Brain microvascular endothelial cell (primary cell): ENCODE measurements at regions of chr6 and their contacts with region 1.

Region 1: DNA sequence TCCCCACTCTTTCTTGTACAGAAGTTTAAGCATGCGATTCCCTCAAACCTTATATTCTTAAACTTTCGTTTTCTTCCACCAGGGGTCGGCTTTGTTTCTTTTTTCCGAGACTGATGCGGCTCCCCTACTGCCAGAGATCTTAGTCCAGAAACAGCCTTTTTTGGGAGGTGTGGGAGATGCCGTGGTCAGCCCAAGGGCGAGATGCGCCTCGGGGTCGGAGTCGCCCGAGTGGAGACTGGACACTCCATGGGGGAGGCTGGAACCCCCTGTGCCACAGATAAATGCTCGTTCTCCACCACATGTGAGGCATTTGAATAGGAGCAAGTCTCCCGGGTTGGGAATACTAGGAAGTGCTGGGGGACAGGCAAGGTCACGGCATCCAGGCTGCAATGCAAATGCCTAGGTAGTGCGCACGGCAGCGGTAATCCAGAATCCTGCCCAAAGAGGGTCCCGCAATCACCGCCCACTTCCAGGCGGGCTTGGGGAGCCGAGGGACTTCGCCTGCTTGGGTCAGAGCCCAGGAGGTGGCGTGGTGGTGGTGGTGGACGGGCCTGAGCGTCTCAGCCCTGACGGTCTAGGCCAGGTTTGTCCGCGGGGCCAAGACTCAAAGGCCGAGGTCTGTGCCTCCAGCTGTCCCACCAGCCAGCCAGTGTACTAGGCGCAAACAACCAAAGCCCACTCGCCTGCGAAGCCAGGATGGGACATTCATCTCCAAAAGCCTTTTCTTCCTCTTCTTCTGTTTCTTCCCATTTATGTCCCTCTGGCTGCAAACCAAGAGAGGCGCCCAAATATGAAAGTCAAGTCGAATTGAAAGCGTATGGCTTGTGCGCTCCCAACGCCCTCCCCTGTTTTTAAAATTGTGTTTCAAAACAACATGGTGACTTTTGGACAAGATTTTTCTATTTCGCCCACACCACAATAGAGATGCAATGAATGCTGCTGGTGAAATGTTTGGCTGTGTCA is 39.3 kb upstream of the OSTM1 start:
- DNase-seq: peak; percentile 53
- H3K4me3 ChIP-seq: peak overlapping the region; percentile 43
- H3K27ac ChIP-seq: no peak overlapping the region
- H3K27me3 ChIP-seq: peaks cover 42% of the 10 kb centered on the region
- CTCF ChIP-seq: peak; percentile 64

Region 2: GRCh38 chr6:108492131-108492766 is 378.4 kb after region 1 on chr6:
- in situ Hi-C with region 1: loop called (anchors 25 kb)
- DNase-seq: peak; percentile 33
- H3K4me3 ChIP-seq: no peak overlapping the region
- H3K27ac ChIP-seq: no peak overlapping the region
- H3K27me3 ChIP-seq: no peaks in the 10 kb centered on the region
- CTCF ChIP-seq: peak; percentile 69